ENCODE measurements at regions of chr3 and their contacts with region 1.

Region 1: DNA sequence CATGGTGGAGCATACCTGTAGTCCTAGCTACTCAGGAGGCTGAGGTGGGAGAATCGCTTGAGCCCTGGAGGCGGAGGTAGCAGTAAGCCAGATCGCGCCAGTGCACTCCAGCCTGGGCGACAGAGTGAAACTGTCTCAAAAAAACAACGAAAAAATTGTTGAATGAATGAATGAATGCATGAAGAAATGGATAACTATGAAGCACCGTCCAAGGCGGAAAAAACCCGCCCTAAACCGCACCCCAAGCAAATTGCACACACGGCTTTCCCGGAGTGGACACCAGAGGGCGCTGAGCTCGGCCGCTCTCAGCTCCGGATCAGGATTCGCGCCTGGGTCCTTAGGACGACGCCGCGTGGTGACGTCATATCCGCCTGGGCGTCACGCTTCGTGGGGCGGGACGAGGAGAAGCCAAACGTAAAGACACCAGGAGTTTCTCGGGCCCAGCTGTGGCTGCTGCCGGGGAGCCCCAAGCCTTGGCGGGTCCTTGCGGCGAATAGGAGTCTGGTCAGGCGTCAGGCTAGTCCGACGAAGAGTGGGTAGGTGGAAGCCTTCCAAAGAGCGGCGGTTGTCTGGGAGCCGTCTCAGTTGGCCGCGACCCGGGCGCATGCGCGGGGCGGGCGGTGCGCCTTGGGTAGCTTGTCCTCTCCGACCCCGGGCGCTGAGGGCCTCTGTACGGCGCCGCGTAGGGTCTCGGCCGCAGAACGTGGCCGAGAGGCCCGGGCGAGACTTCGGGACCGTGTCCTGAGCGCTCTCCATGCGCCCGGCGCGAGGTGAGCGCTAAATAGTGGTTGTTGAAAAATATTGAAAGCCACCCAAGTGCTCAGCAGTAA is at the starts of genes HTD2 and RPP14:
- DNase-seq: peak; percentile 97 to 99 (median 98)
- H3K4me3 ChIP-seq: peak within 1 kb of the TSS; percentile 79 to 80
- H3K4me3 Mint-ChIP-seq: peak within 1 kb of the TSS; percentile 96 to 100 (median 98)
- H3K27ac ChIP-seq: peak within 1 kb of the TSS; percentile 93
- H3K27ac Mint-ChIP-seq: peak within 1 kb of the TSS; percentile 96 to 100 (median 100)
- H3K4me1 ChIP-seq: peaks cover 27% of the 10 kb centered on the region
- H3K4me1 Mint-ChIP-seq: peaks cover 23 to 37% (median 30%) of the 10 kb centered on the region in 4 donors
- H3K27me3 ChIP-seq: no peaks in the 10 kb centered on the region
- H3K27me3 Mint-ChIP-seq: peaks cover 3 to 8% of the 10 kb centered on the region in 2 donors
- total RNA-seq, gene HTD2: 9.2 to 10.5 TPM
- total RNA-seq, gene RPP14: 15.1 to 15.4 TPM

Region 2: DNA sequence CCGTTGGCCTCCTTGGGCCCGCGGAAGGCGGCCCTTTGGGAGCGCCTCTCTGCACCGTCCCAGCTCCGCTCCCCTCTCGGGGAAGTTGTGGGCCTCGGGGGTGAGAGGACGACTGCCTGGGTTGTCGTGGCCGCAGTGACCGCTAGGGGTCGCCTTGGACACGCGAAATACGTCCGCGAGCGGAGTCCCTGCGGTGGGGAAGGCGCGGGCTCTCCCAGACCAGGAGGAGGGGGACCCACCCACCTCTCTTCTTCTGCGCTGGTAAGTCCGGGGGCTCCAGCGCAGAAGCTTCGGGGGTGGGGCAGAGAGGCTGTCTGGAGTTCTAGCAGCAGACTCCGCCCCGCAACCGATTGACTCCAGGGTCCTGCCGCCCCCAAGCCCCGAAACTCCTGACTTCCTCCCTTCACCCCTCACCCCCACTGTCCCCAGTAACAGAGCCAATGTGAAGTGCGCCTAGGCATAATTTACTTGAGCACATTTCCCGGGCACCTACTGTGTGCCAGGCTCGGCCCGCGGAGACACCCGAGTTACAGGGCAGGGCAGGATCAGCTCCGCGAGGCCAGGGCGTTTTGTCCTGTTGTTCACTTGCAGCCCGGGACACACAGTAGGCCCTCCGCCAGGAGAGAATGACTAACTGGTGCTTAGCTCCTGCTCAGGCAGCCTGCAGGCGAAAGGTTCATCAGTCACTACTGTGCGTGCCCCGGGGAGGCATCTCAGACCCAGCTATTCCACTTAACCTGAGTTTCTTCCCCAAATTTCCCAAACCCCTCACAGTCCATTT is 128.2 kb before region 1 on chr3:
- CTCF ChIA-PET with region 1: interaction called, 10 read pairs
- POLR2A ChIA-PET with region 1: interaction called, 3 read pairs
- intact Hi-C with region 1: loop called (anchors 5 kb)
- DNase-seq: peak; percentile 78 to 81 (median 79)
- H3K4me3 ChIP-seq: peak overlapping the region in 1 of 2 donors; percentile 38
- H3K4me3 Mint-ChIP-seq: peak overlapping the region; percentile 42 to 81 (median 74)
- H3K27ac ChIP-seq: no peak overlapping the region
- H3K27ac Mint-ChIP-seq: peak overlapping the region in 1 of 7 donors; percentile 25
- H3K4me1 ChIP-seq: peaks cover 17% of the 10 kb centered on the region
- H3K4me1 Mint-ChIP-seq: peaks cover 3 to 17% (median 11%) of the 10 kb centered on the region in 4 donors
- H3K27me3 ChIP-seq: no peaks in the 10 kb centered on the region
- H3K27me3 Mint-ChIP-seq: no peaks in the 10 kb centered on the region

Region 3: GRCh38 chr3:58317811-58318210 is 11.7 kb after region 1 on chr3:
- CTCF ChIA-PET with region 1: interaction called, 62 read pairs
- POLR2A ChIA-PET with region 1: interaction called, 9 read pairs
- intact Hi-C with region 1: loop called (anchors 2 kb)
- DNase-seq: no peak
- H3K4me3 ChIP-seq: no peak overlapping the region
- H3K4me3 Mint-ChIP-seq: no peak overlapping the region
- H3K27ac ChIP-seq: no peak overlapping the region
- H3K27ac Mint-ChIP-seq: peak overlapping the region in 1 of 7 donors; percentile 82
- H3K4me1 ChIP-seq: no peaks in the 10 kb centered on the region
- H3K4me1 Mint-ChIP-seq: peaks cover 3 to 10% (median 6%) of the 10 kb centered on the region in 4 donors
- H3K27me3 ChIP-seq: no peaks in the 10 kb centered on the region
- H3K27me3 Mint-ChIP-seq: no peaks in the 10 kb centered on the region

Region 4: GRCh38 chr3:58414538-58415197 is 108.6 kb after region 1 on chr3:
- CTCF ChIA-PET with region 1: interaction called, 17 read pairs
- POLR2A ChIA-PET with region 1: no interaction called
- intact Hi-C with region 1: loop called (anchors 1 kb)
- DNase-seq: peak; percentile 46 to 65 (median 53)
- H3K4me3 ChIP-seq: no peak overlapping the region
- H3K4me3 Mint-ChIP-seq: no peak overlapping the region
- H3K27ac ChIP-seq: no peak overlapping the region
- H3K27ac Mint-ChIP-seq: peak overlapping the region in 1 of 7 donors; percentile 47
- H3K4me1 ChIP-seq: no peaks in the 10 kb centered on the region
- H3K4me1 Mint-ChIP-seq: peaks cover 0 to 6% (median 4%) of the 10 kb centered on the region in 4 donors
- H3K27me3 ChIP-seq: no peaks in the 10 kb centered on the region
- H3K27me3 Mint-ChIP-seq: no peaks in the 10 kb centered on the region

Region 5: DNA sequence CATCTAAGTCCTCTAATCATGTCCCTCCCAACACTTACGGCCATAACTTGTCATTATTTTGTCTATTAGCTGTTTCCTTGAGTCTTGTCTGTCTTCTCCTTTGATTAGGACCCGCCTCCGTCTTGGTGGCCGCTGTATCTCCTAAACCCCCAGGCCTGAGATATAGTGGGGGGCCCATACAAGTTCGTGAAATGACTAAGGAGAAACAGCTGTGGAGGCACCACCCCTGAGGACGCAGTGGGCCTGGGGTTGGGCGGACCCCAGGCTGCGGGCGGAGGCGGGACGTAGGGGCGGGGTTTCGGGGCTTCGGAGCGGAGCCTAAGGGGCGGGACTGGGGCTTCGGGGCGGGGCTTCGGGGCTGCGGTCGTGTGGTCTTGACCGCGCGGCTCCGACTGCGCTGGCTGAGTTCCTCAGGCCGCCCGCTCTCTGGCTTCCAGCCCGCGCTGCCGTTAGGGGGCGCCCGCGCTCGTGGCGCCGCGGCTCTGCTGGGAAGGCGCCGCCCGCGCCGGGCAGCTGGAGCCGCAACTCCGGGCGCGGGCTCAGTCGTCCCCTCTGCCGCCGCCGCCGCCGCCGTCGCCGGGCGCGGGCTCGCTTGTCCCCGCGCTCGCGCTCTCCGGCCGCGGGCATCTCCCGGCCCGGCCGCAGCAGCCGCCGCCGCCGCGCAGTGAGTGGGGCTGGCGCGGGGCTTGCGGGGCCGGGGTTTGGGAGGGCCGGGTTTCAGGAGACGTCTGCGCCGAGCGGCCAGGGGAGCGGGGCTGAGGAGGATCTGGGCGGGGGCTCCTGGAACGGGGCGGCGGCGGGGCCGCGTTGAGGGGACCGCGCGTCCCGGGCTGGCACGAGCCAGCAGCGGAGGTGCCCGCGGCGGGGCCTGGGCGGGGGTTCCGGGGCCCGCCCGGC is 185.7 kb after region 1 on chr3 and contains the start of gene KCTD6:
- CTCF ChIA-PET with region 1: interaction called, 89 read pairs
- POLR2A ChIA-PET with region 1: interaction called, 40 read pairs
- intact Hi-C with region 1: loop called (anchors 1 kb)
- DNase-seq: peak; percentile 79 to 91 (median 86)
- H3K4me3 ChIP-seq: peak within 1 kb of the TSS; percentile 31 to 84
- H3K4me3 Mint-ChIP-seq: peak within 1 kb of the TSS; percentile 92 to 97 (median 96)
- H3K27ac ChIP-seq: peak within 1 kb of the TSS; percentile 54
- H3K27ac Mint-ChIP-seq: peak within 1 kb of the TSS; percentile 87 to 98 (median 94)
- H3K4me1 ChIP-seq: peaks cover 52% of the 10 kb centered on the region
- H3K4me1 Mint-ChIP-seq: peaks cover 39 to 78% (median 60%) of the 10 kb centered on the region in 4 donors
- H3K27me3 ChIP-seq: no peaks in the 10 kb centered on the region
- H3K27me3 Mint-ChIP-seq: no peaks in the 10 kb centered on the region
- total RNA-seq, gene KCTD6: 8.9 to 11.6 TPM

Measured in CD4-positive, alpha-beta memory T cell (primary cell).